GM10248 (cell line): ENCODE measurements at regions of chr19 and their contacts with region 1.

Region 1: DNA sequence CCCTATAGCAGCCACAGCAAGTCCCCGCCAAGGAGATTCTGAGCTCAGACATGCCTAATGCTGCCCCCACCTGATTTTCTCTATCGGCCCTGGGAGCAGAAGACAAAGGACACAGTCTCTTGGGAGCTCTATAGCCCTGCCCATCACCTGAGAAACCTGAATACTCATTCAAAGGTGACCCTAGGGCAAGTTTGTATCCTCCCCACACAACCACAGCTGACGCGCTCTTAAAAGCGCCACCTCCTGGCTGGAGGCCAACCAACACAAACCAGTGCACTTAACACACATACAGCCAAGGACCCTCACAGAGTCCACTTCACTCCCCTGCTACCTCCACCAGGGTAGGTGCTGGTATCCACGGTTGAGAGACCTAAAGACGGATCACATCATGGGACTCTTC is 8.8 kb upstream of the IGFL4 start:
- DNase-seq: no peak
- CTCF ChIP-seq: peak; percentile 11

Region 2: GRCh38 chr19:45931055-45931454 is 118.5 kb before region 1 on chr19:
- CTCF ChIA-PET with region 1: no interaction called
- POLR2A ChIA-PET with region 1: no interaction called
- DNase-seq: no peak
- CTCF ChIP-seq: no peak

Region 3: DNA sequence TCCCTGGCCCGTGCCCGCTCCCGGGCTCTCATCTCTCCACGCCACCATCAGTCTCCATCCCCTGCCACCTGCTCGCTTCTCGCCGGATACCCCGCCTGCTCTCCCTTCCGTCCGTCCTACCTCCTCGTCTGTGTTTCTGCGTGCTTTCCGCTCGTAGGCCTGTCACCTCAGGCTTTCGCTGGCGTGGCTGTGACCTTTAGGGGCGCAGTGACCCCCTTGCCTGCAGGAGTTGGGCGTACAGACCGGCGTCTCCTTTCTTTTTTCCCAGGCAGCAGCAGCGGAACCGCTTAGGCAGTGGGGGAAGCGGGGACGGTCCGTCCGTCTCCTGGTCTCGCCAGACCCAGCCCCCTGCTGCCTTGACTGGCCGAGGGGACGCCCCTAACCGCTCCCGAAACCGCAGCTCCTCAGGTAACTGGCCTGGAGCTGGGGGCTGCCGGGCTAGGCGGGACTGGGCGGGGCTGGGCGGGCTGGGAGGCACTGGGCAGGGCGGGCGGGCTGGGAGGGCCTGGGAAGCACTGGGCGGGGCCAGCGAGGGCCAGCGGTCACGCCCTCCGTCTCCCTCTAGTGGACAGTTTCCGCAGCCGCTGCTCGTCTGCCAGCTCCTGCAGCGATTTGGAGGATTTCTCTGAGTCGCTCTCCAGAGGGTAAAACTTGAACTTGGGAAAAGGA is 33.0 kb before region 1 on chr19:
- CTCF ChIA-PET with region 1: no interaction called
- POLR2A ChIA-PET with region 1: no interaction called
- DNase-seq: peak; percentile 93
- CTCF ChIP-seq: peak; percentile 87

Region 4: GRCh38 chr19:46030812-46031550 is 18.6 kb before region 1 on chr19:
- CTCF ChIA-PET with region 1: interaction called, 18 read pairs
- POLR2A ChIA-PET with region 1: no interaction called
- DNase-seq: no peak
- CTCF ChIP-seq: no peak